OCI-LY7 (cell line): ENCODE measurements at regions of chr6 and their contacts with region 1.

Region 1: GRCh38 chr6:153231048-153231646 is 100.1 kb upstream of the RGS17 start:
- DNase-seq: peak; percentile 15
- H3K4me3 ChIP-seq: no peak overlapping the region
- H3K27ac ChIP-seq: no peak overlapping the region
- H3K4me1 ChIP-seq: no peaks in the 10 kb centered on the region
- CTCF ChIP-seq: peak; percentile 82

Region 2: DNA sequence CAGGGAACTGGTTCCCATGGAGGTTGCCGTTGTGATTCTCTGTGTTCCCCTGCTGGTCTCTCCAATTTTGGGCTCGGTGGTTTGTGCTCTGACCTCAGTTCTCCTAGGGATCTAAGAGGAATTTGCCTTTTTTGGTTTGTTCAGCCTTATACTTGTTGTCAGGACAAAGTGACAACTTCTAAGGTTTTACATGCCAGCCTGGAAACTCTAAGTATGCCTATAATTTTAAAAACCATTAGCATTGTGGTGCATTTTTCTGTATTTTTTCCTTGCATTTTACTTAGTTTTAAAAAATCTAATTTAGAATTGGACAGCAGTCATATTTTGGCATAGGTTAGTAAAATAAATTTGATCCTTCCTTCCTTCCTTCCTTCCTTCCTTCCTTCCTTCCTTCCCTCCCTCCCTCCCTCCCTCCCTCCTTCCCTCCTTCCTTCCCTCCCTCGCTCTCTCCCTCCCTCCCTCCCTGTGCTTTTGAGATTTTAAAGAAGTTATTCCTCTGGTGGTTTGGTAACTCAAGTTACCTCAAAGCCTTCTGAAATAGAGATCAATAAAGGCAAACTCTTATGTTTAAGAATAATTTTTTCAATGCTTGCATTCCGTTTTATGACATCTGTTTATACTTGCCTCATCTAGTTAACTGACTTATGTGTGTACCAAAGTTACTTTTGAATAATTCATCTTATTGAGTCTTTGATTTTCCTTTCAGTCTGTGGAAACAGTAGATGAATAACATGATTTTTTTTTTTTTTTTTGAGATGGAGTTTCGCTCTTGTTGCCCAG is 41.2 kb after region 1 on chr6:
- CTCF ChIA-PET with region 1: no interaction called
- POLR2A ChIA-PET with region 1: no interaction called
- intact Hi-C with region 1: no loop called
- DNase-seq: no peak
- H3K4me3 ChIP-seq: no peak overlapping the region
- H3K27ac ChIP-seq: no peak overlapping the region
- H3K4me1 ChIP-seq: no peaks in the 10 kb centered on the region
- CTCF ChIP-seq: no peak

Region 3: GRCh38 chr6:153312641-153313040 is 81.5 kb after region 1 on chr6:
- CTCF ChIA-PET with region 1: no interaction called
- POLR2A ChIA-PET with region 1: no interaction called
- intact Hi-C with region 1: loop called (anchors 5 kb)
- DNase-seq: peak; percentile 26
- H3K4me3 ChIP-seq: no peak overlapping the region
- H3K27ac ChIP-seq: no peak overlapping the region
- H3K4me1 ChIP-seq: no peaks in the 10 kb centered on the region
- CTCF ChIP-seq: peak; percentile 83